GM13977 (cell line): ENCODE measurements at regions of chr2 and their contacts with region 1.

Region 1: GRCh38 chr2:43226558-43226954 is at the start of gene ZFP36L2:
- DNase-seq: peak; percentile 99
- CTCF ChIP-seq: no peak

Region 2: GRCh38 chr2:42974721-42975717 is 251.5 kb before region 1 on chr2:
- in situ Hi-C with region 1: loop called (anchors 25 kb)
- DNase-seq: peak; percentile 53
- CTCF ChIP-seq: peak; percentile 86

Region 3: DNA sequence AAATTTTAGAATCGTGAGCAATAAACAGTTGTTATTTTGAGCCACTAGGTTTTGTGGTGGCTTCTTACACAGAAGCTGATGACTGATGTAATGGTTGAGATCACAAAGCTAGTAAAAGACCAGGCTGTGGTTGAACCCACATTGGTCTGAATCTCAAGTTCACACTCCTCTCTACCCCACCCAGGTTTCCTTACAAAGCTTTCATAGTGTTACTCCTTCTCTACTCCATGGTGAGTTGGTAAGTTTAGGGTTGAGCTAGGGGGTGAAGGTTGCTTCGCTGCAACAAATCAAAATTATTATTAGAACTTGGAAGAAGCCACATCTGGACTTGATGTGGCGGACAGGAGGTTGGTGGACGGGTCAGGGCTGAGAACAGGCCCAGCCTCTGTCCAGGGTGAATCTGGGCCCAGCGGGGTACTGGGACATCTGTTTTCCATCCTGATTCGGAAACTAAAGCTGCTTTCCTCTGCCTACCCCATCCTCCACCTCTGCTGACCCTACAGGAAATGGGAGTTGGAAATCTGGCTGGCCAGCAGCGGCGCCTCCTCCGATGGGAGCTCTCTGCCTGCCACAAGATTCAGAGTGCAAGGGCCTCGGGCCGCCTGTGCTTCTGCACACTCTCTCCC is 86.4 kb before region 1 on chr2:
- in situ Hi-C with region 1: loop called (anchors 5 kb)
- DNase-seq: peak; percentile 51
- CTCF ChIP-seq: no peak

Region 4: GRCh38 chr2:43169987-43170386 is 56.6 kb before region 1 on chr2:
- in situ Hi-C with region 1: loop called (anchors 10 kb)
- DNase-seq: peak; percentile 66
- CTCF ChIP-seq: peak; percentile 78

Region 5: DNA sequence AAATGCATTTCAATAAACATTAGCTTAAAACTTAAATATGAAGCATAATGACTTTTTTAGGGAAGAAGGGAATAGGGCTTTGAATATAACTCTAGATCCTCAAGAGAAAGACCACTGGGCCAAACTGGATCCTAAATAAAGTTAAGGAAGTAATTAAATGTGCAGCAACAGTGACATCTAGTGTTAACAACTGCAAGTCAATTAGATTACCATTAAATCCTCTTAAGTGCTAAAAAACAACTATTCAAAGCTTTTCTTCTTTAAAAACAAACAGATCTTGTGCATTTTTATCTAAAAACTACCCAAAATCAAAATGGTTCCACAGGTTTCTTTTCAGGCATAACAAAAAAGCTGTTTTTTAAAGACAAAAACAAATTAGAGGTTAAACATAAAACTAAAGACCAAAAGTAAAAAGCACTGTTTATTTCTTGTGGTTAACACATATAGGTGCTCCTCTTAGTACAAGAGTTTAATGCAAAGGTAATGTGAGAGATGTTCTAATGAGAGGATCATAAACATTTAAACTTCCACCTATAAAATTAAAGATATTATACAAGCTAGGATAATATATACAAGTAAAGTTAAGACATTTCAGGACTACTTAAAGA is 257.9 kb after region 1 on chr2:
- in situ Hi-C with region 1: loop called (anchors 10 kb)
- DNase-seq: no peak
- CTCF ChIP-seq: peak; percentile 52